Activated CD4-positive, alpha-beta memory T cell treated with anti-CD3 and anti-CD28 coated beads, Interleukin-2, amount 10 ng/mL, durations not matched to agents 7 days and 5 days (primary cell): ENCODE measurements at regions of chr1 and their contacts with region 1.

Region 1: DNA sequence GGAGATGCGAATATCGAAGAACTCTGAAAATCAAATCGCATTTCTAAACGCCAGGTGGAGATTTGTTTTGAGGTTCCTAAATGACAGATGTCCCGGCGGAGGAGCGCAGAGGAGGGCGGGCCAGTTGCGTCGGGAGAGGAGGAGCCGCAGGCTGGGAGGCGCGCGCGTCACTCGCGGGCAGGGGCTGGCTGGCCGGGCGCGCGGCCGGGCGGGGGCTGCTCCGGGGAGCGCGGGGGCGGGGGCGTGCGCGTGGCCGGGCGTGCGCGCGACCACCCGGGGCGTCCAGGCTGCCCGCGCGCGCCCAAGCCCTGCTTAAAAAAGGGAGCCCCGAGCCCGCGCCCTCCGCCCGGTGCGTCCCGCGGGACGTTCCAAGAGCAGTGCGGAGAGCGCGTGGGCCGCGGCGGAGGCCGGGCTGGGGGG is 47.3 kb downstream of the H3-3A start:
- DNase-seq: peak; percentile 84
- H3K4me3 Mint-ChIP-seq: peak overlapping the region; percentile 87
- H3K27ac Mint-ChIP-seq: peak overlapping the region; percentile 78
- H3K4me1 Mint-ChIP-seq: peaks cover 19% of the 10 kb centered on the region
- H3K27me3 Mint-ChIP-seq: no peaks in the 10 kb centered on the region

Region 2: DNA sequence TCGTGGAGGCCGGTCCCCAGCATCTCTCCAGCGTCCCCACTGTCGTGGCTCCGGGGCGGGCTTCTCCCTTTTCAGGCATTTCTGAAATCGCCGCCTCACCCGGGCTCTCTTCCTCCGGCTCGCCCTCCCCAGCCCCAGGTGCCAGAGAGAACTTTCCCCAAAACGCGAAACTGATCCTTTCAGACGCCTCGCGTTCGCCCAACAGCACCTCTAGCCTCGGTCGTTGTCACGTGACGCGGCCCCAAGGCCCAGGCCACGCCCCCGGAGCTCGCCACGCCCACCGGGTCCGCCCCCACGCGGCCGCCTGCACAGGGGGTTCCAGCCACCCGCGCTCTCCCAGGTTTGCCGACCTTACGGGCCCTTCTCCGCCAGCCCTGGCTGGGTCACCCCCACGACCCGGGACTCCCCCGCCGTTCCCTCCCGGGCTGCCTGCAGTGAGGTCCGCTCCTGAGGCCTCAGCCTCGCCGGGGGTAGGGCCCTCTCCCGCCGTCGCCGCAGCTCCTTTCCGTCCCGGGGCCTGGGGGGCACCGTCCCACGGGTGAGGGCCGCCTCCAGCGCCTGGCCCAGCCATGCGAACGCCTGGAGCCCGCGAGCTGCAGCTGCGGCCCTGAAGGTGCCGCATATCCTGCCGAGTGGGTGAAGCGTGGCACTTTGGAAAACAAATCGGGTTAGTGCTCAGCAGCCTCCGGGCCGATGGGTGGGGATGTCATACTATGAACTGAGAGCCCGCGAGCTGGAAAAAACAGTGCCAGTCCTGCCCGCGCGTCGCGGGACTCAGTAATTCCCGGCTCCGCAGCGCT is 26.3 kb before region 1 on chr1:
- CTCF ChIA-PET with region 1: interaction called, 6 read pairs
- POLR2A ChIA-PET with region 1: interaction called, 18 read pairs
- DNase-seq: peak; percentile 91
- H3K4me3 Mint-ChIP-seq: peak overlapping the region; percentile 93
- H3K27ac Mint-ChIP-seq: peak overlapping the region; percentile 54
- H3K4me1 Mint-ChIP-seq: peaks cover 8% of the 10 kb centered on the region
- H3K27me3 Mint-ChIP-seq: peaks cover 6% of the 10 kb centered on the region

Region 3: DNA sequence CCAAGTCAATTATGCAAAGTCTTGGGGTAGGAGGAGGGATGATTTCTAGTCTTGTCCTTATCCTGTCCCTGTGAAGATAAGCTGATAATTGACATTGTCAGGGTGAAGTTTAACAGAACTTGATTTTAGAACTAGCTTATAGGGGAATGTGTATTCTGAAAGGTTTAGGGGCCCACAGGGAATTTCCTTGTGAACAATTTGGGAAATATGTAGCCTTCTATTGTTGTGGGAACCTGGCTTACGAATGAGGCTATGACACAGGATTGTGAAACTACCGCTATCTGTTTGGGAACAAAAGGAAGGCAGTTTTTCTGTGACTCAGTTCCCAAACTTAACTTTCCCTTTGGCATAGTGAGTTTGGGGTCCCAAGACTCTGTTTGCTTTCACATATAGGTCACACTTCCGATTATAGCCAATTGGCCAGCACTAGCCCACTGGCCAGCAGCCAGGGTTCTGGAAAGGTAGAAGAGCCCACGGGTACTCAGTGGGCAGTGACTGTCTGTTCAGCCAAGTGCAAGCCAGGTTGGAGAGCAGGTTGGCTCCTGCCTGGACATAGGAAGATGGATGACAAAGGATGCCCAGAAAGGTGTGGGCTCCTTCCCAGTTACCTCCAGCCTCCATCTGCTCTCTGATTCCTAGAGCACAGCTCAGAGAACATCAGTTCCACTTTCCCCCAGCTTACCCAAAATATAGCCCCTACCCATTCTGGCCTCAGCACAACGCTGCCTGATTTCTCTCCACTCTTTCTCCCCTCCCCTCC is 11.8 kb before region 1 on chr1:
- CTCF ChIA-PET with region 1: interaction called, 3 read pairs
- POLR2A ChIA-PET with region 1: interaction called, 15 read pairs
- DNase-seq: no peak
- H3K4me3 Mint-ChIP-seq: no peak overlapping the region
- H3K27ac Mint-ChIP-seq: no peak overlapping the region
- H3K4me1 Mint-ChIP-seq: peaks cover 16% of the 10 kb centered on the region
- H3K27me3 Mint-ChIP-seq: peaks cover 16% of the 10 kb centered on the region

Region 4: DNA sequence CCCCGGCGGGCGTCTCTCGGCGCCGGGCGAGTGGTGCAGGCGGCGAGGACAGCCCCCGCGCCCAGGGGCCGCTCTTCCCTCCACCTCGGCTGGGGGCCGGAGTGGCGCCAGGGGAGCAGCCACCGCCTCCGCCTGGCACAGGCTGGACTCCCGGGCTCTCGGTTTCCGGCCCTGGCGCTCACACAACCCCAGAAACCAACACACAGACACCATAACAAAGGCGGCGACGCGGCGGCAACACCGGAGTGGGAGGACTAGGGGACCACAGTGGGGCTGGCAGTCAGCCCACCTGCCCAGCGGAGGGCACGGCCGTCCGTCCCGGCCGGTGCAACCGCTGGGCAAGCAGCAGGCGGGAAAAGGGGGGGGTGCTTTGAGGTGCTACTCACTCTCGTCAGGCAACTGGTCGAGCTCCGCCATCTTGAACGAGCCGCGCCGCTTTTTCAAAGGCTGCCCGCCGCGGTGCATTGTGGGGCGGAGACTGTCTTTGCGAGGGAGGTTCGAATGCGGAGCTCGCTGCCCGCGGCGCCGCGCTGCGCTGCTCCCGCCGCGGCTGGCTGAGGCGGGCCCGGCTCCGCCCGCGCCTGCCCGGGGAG is 199.0 kb after region 1 on chr1 and contains the start of gene LIN9:
- CTCF ChIA-PET with region 1: no interaction called
- POLR2A ChIA-PET with region 1: interaction called, 14 read pairs
- DNase-seq: peak; percentile 94
- H3K4me3 Mint-ChIP-seq: peak within 1 kb of the TSS; percentile 89
- H3K27ac Mint-ChIP-seq: peak within 1 kb of the TSS; percentile 87
- H3K4me1 Mint-ChIP-seq: peaks cover 32% of the 10 kb centered on the region
- H3K27me3 Mint-ChIP-seq: peaks cover 13% of the 10 kb centered on the region
- total RNA-seq, gene LIN9: 10.4 to 11.5 TPM